Left ventricle myocardium superior (tissue), 1 donor: ENCODE measurements at regions of chr11 and their contacts with region 1.

Region 1: DNA sequence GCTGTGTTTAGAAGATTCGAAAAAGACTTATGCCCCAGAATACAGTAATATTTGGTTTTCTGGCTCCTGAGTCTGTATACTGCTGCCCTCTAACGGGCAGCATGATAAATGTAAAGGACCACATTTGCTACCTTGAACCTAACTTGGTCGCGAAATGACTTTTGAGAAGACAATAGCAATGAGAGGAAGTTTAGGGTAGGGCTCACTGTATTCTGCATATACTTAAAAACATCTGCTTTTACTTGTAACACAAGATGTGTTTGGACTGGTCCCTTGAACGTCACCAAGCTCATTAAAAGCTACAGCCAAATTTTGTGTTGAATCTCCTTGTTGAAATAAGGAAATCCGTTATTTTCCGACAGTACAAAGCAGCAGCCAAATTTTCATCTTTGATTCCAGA is 309.1 kb downstream of the SWAP70 start:
- DNase-seq: no peak
- ATAC-seq: peak; percentile 85

Region 2: DNA sequence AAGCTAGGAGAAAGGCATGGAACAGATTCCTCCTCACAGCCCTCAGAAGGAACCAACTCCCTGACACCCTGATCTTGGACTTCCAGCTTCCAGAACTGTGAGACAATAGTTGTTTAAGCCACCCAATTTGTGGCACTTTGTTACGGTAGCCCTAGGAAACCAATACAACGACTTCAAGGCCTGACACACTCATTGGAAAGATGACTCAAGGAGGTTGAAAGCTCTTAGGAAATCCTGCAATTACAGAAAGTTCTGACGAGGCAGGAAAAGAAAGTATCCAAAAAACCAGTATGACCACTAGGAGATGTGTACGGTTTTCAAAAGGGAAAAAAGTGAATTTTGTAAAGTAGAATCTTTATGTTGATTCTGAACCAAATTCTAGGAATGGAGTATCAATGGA is 147.7 kb before region 1 on chr11:
- intact Hi-C with region 1: no loop called
- DNase-seq: no peak
- ATAC-seq: no peak

Region 3: DNA sequence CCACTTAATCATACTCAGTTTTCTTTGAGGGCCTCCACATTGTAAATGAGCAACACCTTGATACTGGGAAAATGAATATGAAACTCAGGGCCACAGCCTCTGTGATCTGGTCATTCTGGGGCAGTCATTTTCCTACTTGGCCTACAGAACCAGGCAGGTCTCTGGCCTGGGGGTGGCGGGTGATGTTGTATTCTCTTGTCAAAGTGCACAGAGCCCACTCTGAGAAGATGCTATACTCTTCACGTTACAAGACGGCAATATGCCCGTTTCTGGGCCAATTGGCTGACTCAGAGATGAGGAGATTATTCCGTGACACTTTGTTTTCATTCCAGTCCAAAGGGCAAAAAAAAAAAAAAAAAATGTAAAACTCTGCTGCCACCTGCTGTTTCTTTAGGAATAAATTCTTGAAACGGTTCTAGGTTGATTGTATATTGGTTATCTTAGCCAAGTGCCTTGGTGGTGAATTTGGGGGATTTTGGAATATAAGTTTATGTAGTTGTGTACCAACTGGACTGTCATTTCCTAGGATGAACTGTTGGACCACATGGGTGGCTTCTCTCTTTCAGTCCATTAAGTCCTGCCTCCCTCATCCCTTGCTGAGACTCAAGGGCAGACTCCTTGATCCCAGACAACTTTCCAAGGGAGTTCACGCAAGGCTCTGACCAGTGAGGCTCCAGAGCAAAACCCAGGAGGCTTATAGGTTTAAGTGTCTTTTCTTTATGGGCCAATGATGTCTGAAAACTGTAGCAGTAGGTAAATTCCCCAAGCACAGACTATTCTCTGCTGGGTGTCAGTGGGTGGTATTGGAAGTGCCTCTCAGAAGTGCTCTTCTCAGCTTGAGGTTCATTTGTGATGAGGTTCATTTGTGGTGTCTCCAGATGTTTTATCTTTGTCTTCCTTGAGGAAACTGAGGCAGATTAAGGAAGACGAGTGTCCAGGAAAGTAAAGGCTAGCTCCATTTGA is 350.1 kb after region 1 on chr11:
- intact Hi-C with region 1: loop called (anchors 10 kb)
- DNase-seq: peak; percentile 39
- ATAC-seq: peak; percentile 32